ENCODE measurements at regions of chr13 and their contacts with region 1.

Region 1: DNA sequence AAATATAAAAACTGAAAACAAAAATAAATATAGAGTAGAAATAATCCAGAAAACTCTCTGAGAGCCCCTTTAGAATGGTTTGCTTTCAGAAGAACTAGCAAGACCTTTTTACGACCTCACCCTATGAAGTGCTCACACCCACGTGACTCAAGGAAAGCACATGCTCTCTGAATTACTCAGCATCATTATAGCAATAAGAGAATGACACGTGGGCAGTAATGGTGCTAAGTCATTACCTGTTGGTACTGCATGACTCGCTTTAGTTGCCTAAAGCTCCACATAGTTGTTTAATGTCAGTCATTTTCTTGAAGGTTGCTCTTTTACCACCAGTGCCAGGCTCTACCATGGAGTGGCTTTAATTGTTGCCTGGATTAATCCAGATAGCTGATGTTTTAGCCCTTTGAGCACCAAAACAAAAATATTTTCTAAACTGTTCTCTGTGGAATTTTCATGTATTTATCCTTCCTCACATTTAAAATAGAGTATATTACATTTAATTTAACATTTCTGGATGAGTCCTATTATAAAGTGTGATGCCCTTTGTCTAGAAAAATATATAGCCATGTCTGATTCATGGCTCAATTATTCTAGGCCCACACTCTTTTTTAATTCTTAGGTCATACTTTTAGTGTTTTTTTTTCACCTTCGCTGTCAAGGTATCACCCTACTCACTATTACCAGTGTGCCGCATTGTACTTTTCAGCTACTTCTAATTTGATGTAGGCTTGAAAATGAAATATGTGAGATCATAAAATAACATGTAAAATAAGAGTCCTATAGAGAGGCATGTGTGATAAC is 56.8 kb downstream of the THSD1 start:
- DNase-seq: peak in 19 of 42 donors; percentile 5 to 68 (median 30)

Region 2: DNA sequence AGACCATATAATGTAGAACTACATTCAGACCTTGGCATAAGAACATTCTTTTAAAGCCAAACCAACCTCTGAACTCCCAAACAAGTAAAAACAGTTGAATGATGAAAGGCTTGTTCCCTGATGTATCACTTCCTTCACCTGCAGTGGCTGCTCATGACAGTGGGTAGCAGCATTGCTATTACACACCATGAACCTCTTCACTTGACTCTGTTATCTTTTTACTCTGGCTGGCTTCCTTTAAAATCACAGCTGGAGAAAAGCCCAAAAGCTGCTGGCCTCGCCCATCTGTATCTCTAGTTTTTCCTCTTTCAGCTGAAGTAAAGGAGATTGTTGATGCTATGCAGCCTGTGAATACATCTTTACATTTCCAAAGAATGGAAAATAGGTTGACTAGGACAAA is 34.2 kb after region 1 on chr13:
- intact Hi-C with region 1: no loop called
- DNase-seq: no peak

Region 3: DNA sequence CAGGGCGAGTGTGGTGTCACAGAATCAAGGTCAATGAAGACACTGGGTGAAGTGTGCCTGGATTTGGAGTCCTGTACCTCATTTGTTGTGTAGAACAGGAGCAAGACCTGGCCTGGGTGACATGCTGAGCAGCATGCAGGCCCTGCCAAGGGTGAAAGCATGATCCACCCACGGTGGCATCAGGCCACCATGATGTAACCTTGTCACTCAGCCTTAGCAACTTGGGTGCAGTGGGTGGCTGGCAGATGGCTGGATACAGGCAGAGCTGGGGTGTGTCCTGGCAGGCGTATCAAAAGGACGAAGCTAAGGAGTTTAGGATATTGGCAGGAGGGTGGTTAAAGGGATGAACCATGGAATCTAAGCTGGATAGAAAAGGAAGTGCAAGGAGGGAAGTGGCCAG is 46.5 kb after region 1 on chr13:
- intact Hi-C with region 1: no loop called
- DNase-seq: no peak

Region 4: DNA sequence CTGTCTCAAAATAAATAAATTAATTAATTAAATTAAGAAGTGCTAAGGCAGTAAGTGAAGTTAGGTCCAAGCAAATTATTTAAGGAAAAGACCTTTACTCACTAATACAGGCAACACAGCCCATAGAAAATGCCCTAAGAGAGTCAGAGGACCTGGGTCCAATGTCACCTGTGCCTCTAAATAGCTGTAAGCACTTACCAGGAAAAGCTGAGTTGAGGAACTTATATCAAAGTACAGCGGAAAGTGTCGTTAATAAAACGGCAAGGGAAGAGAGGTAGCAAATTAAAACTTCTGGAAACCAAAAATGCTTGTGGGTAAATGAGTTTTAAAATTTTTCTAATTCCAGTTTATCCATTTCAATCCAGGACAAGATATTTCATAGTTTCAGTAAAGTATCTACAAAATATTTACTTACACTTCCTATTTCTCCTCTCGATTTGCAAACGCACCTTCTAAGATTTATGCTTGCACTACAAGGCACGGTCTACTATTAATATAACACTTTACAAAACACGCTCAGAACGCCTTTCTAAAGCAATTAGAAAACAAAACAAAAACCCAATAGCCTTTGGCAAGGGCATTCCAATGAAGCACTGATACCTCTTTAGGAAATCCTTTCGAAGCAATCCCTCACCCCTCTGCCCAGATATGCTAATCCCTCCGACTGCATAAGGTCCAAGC is 100.3 kb after region 1 on chr13:
- intact Hi-C with region 1: loop called (anchors 5 kb)
- DNase-seq: no peak

Region 5: GRCh38 chr13:52463526-52463925 is 114.3 kb after region 1 on chr13:
- intact Hi-C with region 1: no loop called
- DNase-seq: no peak